ENCODE measurements at regions of chr15 and their contacts with region 1.

Region 1: DNA sequence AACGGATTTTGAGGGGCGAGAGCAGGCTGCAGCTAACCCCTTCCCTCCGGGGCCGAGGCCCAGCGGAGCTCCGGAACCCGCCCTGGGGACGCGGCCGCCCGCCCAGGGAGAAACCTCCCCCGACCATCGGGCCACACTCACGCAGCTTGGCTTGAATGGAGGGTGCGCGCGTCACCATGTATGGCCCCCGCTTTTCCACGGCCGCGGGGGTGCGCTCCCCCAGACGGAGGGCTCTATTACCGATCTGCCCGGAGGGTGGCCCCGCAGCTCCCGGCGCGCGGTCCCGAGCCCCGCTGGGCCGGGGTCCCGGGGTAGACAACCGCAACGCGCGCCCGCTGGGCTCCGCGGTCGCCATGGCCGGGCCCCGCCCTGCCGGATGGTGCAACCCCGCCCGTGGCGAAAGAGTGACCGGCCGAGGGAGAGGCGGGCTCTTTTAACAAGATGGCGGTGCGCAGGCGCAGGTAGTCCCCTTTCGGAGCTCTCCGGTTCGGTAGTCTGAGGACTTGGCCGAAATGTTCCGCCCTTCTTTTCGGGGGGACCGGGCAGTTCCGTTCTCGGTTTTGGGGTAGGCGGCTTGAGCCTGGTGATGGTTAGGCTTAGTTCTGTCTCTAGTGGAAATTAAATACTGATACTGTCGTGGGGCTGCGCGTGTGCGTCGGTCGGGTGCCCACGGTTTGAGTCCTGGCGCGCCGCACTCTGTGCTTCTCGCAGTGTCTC is at the start of gene FAM219B:
- DNase-seq: peak; percentile 67 to 80 (median 68)
- H3K4me3 ChIP-seq: peak within 1 kb of the TSS; percentile 61 to 94
- H3K4me3 Mint-ChIP-seq: peak within 1 kb of the TSS; percentile 96 to 100 (median 99)
- H3K27ac ChIP-seq: peak within 1 kb of the TSS; percentile 83
- H3K27ac Mint-ChIP-seq: peak within 1 kb of the TSS; percentile 92 to 99 (median 98)
- H3K4me1 ChIP-seq: peaks cover 32% of the 10 kb centered on the region
- H3K4me1 Mint-ChIP-seq: peaks cover 25 to 52% (median 39%) of the 10 kb centered on the region in 4 donors
- H3K27me3 ChIP-seq: no peaks in the 10 kb centered on the region
- H3K27me3 Mint-ChIP-seq: no peaks in the 10 kb centered on the region
- total RNA-seq, gene FAM219B: 101 to 117 TPM

Region 2: DNA sequence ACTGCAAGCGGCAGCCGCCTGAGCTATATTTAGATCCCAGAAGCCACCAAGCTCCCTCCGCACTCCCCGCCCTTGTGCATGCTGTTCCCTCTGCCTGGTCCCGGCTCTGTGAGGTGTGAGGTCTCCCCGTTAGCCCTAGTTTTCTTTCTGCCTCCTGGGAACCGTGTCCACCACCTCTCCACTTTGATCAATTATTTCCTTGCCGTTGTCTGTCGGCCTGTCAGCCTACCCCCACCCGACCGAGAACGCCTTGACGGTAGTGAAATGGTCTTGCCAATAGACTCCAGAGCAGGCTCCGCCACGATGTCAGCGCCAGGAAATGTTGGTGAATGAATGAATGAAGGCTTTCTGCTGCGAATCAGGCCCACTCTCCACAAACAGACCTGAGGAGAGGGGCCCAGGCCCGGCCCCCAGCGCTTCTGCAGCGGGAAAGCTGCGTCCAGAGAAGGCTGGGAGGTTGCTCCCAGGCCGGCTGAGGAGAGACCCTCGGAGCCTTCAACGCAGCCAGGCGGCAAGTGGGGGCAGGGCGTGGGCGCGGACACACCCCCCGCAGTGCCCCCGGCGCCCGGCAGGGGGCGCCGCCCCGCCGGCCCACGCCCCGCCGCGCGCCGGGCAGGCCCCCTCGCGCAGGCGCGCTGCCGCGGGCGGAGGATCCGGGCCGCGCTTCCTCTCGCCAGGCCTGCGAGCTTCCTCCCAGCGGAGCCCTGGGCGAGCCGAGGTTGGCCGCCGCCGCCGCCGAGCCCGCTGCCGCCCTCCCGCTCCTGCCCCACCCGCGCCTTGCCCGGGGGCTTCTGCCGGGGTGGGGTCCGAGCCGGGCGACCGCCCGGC is 125.0 kb before region 1 on chr15 and contains the start of gene CSK:
- CTCF ChIA-PET with region 1: interaction called, 32 read pairs
- POLR2A ChIA-PET with region 1: interaction called, 19 read pairs
- intact Hi-C with region 1: no loop called
- DNase-seq: peak; percentile 74 to 87 (median 84)
- H3K4me3 ChIP-seq: peak within 1 kb of the TSS; percentile 93 to 97
- H3K4me3 Mint-ChIP-seq: peak within 1 kb of the TSS; percentile 90 to 97 (median 96)
- H3K27ac ChIP-seq: peak within 1 kb of the TSS; percentile 86
- H3K27ac Mint-ChIP-seq: peak within 1 kb of the TSS; percentile 95 to 98 (median 98)
- H3K4me1 ChIP-seq: peaks cover 80% of the 10 kb centered on the region
- H3K4me1 Mint-ChIP-seq: peaks cover 48 to 90% (median 62%) of the 10 kb centered on the region in 4 donors
- H3K27me3 ChIP-seq: no peaks in the 10 kb centered on the region
- H3K27me3 Mint-ChIP-seq: no peaks in the 10 kb centered on the region
- total RNA-seq, gene CSK: 234 to 247 TPM

Region 3: DNA sequence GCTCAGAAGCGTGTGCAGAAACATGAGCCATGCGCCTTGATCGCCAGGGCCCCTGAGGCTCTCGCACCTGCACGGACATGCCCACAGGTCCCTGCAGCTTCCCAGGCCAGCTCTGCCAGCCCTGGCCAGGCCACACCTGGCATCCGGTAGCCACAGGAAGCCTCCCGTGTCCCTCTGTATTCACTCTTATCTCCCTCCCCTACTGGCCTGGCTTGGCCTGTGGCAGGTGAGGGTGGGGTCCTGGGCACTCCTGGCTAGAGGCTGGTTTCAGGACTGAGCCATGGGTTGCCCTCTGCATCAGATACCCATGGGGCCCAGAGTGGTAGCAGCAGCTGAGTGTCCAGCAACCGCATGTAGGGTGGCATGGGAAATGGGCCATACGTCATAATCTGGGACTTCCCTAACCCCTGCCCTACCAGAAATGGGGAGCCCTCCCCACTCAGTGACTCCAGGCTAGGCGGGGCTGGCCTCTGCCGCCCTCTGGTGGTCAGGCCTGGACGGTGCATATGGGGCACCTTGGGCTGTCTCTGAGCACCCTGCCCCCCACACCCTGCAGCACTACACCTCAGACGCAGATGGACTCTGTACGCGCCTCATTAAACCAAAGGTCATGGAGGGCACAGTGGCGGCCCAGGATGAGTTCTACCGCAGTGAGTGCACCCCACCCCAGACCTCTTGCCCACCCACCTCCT is 106.6 kb before region 1 on chr15:
- CTCF ChIA-PET with region 1: interaction called, 15 read pairs
- POLR2A ChIA-PET with region 1: interaction called, 4 read pairs
- intact Hi-C with region 1: no loop called
- DNase-seq: peak; percentile 84 to 89 (median 86)
- H3K4me3 ChIP-seq: no peak overlapping the region
- H3K4me3 Mint-ChIP-seq: peak overlapping the region in 4 of 8 donors; percentile 17 to 65 (median 46)
- H3K27ac ChIP-seq: peak overlapping the region; percentile 84
- H3K27ac Mint-ChIP-seq: peak overlapping the region; percentile 83 to 97 (median 94)
- H3K4me1 ChIP-seq: peaks cover 55% of the 10 kb centered on the region
- H3K4me1 Mint-ChIP-seq: peaks cover 28 to 59% (median 45%) of the 10 kb centered on the region in 4 donors
- H3K27me3 ChIP-seq: no peaks in the 10 kb centered on the region
- H3K27me3 Mint-ChIP-seq: no peaks in the 10 kb centered on the region

Region 4: GRCh38 chr15:74842581-74843444 is 63.8 kb before region 1 on chr15 and contains the start of gene ULK3:
- CTCF ChIA-PET with region 1: interaction called, 136 read pairs
- POLR2A ChIA-PET with region 1: interaction called, 106 read pairs
- intact Hi-C with region 1: loop called (anchors 1 kb)
- DNase-seq: peak; percentile 92 to 94 (median 93)
- H3K4me3 ChIP-seq: peak within 1 kb of the TSS; percentile 81 to 83
- H3K4me3 Mint-ChIP-seq: peak within 1 kb of the TSS; percentile 87 to 92 (median 91)
- H3K27ac ChIP-seq: peak within 1 kb of the TSS; percentile 77
- H3K27ac Mint-ChIP-seq: peak within 1 kb of the TSS; percentile 91 to 97 (median 93)
- H3K4me1 ChIP-seq: peaks cover 52% of the 10 kb centered on the region
- H3K4me1 Mint-ChIP-seq: peaks cover 37 to 57% (median 46%) of the 10 kb centered on the region in 4 donors
- H3K27me3 ChIP-seq: no peaks in the 10 kb centered on the region
- H3K27me3 Mint-ChIP-seq: no peaks in the 10 kb centered on the region
- total RNA-seq, gene ULK3: 84.9 to 88.3 TPM

Region 5: DNA sequence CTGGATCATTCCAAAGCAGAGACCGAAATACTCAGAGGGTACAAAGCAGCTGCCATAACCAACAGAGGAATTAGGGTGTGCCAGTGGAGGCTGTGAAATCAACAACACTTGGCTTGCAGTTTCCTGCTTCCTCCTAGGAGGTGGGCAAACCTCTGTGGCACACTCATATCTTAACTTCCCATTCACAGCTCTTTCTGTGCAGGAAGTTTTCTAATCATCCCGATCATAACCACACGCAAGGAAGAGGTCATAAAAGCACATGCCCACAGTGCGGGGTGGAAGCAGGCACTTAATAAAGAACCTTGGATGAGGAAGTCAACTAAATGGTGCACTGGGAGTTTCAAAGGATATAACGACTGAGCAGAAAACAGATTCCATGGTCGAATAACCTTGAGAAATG is 38.5 kb before region 1 on chr15:
- CTCF ChIA-PET with region 1: interaction called, 79 read pairs
- POLR2A ChIA-PET with region 1: interaction called, 32 read pairs
- intact Hi-C with region 1: loop called (anchors 1 kb)
- DNase-seq: no peak
- H3K4me3 ChIP-seq: peak overlapping the region in 1 of 2 donors; percentile 23
- H3K4me3 Mint-ChIP-seq: peak overlapping the region; percentile 58 to 87 (median 74)
- H3K27ac ChIP-seq: peak overlapping the region; percentile 28
- H3K27ac Mint-ChIP-seq: peak overlapping the region; percentile 77 to 98 (median 88)
- H3K4me1 ChIP-seq: peaks cover 91% of the 10 kb centered on the region
- H3K4me1 Mint-ChIP-seq: peaks cover 63 to 93% (median 77%) of the 10 kb centered on the region in 4 donors
- H3K27me3 ChIP-seq: no peaks in the 10 kb centered on the region
- H3K27me3 Mint-ChIP-seq: no peaks in the 10 kb centered on the region

Region 6: GRCh38 chr15:74889883-74890664 is 16.5 kb before region 1 on chr15 and contains the start of gene MPI:
- CTCF ChIA-PET with region 1: interaction called, 18 read pairs
- POLR2A ChIA-PET with region 1: interaction called, 155 read pairs
- intact Hi-C with region 1: loop called (anchors 1 kb)
- DNase-seq: peak; percentile 78 to 86 (median 79)
- H3K4me3 ChIP-seq: peak within 1 kb of the TSS; percentile 94 to 99
- H3K4me3 Mint-ChIP-seq: peak within 1 kb of the TSS; percentile 87 to 97 (median 94)
- H3K27ac ChIP-seq: peak within 1 kb of the TSS; percentile 78
- H3K27ac Mint-ChIP-seq: peak within 1 kb of the TSS; percentile 80 to 97 (median 94)
- H3K4me1 ChIP-seq: peaks cover 58% of the 10 kb centered on the region
- H3K4me1 Mint-ChIP-seq: peaks cover 30 to 54% (median 42%) of the 10 kb centered on the region in 4 donors
- H3K27me3 ChIP-seq: no peaks in the 10 kb centered on the region
- H3K27me3 Mint-ChIP-seq: no peaks in the 10 kb centered on the region
- total RNA-seq, gene MPI: 70.4 to 73.1 TPM